ENCODE measurements at regions of chr6 and their contacts with region 1.

Region 1: GRCh38 chr6:27146706-27147505 is 100.6 kb upstream of the PRSS16 start:
- DNase-seq: peak; percentile 93
- H3K4me3 ChIP-seq: peak overlapping the region; percentile 47 to 66
- H3K27ac ChIP-seq: peak overlapping the region; percentile 88 to 94
- H3K4me1 ChIP-seq: no peaks in the 10 kb centered on the region
- H3K27me3 ChIP-seq: no peaks in the 10 kb centered on the region
- CTCF ChIP-seq: no peak
- POLR2A ChIP-seq: peak; percentile 96

Region 2: GRCh38 chr6:26054857-26055669 is 1091.8 kb before region 1 on chr6:
- intact Hi-C with region 1: loop called (anchors 10 kb)
- DNase-seq: peak; percentile 92
- H3K4me3 ChIP-seq: peak overlapping the region; percentile 48 to 75
- H3K27ac ChIP-seq: peak overlapping the region; percentile 91 to 94
- H3K4me1 ChIP-seq: no peaks in the 10 kb centered on the region
- H3K27me3 ChIP-seq: no peaks in the 10 kb centered on the region
- CTCF ChIP-seq: peak in 2 of 4 experiments; percentile 34 to 59
- POLR2A ChIP-seq: peak; percentile 63

Region 3: GRCh38 chr6:27132532-27133280 is 14.2 kb before region 1 on chr6:
- intact Hi-C with region 1: loop called (anchors 1 kb)
- DNase-seq: peak; percentile 95
- H3K4me3 ChIP-seq: peak overlapping the region; percentile 48 to 49
- H3K27ac ChIP-seq: peak overlapping the region; percentile 85 to 90
- H3K4me1 ChIP-seq: no peaks in the 10 kb centered on the region
- H3K27me3 ChIP-seq: no peaks in the 10 kb centered on the region
- CTCF ChIP-seq: peak in 1 of 4 experiments; percentile 4
- POLR2A ChIP-seq: peak; percentile 92

Measured in prostate gland (tissue), 2 donors.